ENCODE measurements at regions of chr2 and their contacts with region 1.

Region 1: GRCh38 chr2:40434638-40435296 is 17.1 kb downstream of the SLC8A1 start:
- DNase-seq: peak; percentile 87
- H3K4me3 ChIP-seq: no peak overlapping the region
- CTCF ChIP-seq: no peak

Region 2: GRCh38 chr2:40448468-40449079 is 13.8 kb after region 1 on chr2:
- CTCF ChIA-PET with region 1: interaction called, 41 read pairs
- POLR2A ChIA-PET with region 1: interaction called, 13 read pairs
- DNase-seq: no peak
- H3K4me3 ChIP-seq: no peak overlapping the region
- CTCF ChIP-seq: peak; percentile 70

Region 3: DNA sequence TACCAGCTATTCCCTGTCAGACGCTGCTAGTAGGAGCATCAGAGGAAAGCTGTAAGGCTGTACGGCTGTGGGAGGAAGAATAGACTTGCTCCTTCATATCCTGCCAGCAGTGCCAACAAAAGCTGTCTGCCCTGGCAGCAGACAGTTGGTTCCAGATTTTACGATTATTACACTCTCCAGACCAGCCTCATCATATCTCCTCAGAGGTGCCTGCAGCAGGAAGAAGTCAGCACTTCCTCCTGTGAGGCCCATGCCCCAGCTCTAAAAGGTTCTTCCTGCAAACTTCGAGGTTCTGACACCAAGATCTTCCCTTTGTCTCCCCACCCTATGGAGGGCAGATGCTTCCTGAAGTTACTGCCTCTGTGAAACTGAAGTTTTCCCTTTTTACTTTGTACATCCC is 1075.3 kb after region 1 on chr2:
- CTCF ChIA-PET with region 1: no interaction called
- POLR2A ChIA-PET with region 1: no interaction called
- DNase-seq: no peak
- H3K4me3 ChIP-seq: no peak overlapping the region
- CTCF ChIP-seq: no peak